Left cardiac atrium (tissue), 4 donors: ENCODE measurements at regions of chr20 and their contacts with region 1.

Region 1: DNA sequence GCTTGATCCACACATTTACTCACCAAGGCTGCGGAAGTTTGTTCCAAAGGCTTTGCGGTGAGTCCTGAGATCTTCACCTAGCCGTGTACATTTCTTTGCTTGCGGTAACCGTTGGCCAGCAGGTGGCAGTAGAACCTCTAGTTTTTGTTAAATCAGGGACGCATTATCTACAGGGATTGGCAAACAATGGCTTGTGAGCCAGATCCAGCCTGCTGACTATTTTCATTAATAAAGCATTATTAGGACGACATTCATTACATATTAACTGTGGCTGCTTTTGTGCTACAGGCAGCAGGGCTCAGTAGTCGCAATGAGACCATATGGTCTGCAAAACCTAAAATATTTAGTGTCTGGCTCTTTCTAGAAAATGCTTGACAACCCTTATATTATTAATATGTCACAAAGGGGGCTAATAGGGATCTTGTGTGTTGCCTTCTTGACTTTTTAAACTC is 174.1 kb downstream of the DOK5 start:
- DNase-seq: peak; percentile 85
- ATAC-seq: peak; percentile 78 to 89

Region 2: DNA sequence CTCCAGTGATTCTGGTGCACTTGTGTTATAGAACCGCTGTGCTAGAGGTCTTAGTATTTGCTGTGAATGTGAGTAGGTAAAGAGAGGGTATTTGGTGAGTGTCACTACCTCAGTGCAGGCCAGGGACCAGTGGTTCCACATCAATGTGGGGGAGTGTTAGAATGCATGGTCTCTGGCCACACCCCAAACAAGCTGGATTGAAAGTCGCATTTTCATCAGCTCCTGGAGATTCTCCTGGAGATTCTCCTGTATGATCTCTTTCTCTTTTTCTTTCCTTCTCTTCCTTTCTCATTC is 552.4 kb before region 1 on chr20:
- intact Hi-C with region 1: loop called (anchors 2 to 10 kb)
- DNase-seq: no peak
- ATAC-seq: no peak

Region 3: DNA sequence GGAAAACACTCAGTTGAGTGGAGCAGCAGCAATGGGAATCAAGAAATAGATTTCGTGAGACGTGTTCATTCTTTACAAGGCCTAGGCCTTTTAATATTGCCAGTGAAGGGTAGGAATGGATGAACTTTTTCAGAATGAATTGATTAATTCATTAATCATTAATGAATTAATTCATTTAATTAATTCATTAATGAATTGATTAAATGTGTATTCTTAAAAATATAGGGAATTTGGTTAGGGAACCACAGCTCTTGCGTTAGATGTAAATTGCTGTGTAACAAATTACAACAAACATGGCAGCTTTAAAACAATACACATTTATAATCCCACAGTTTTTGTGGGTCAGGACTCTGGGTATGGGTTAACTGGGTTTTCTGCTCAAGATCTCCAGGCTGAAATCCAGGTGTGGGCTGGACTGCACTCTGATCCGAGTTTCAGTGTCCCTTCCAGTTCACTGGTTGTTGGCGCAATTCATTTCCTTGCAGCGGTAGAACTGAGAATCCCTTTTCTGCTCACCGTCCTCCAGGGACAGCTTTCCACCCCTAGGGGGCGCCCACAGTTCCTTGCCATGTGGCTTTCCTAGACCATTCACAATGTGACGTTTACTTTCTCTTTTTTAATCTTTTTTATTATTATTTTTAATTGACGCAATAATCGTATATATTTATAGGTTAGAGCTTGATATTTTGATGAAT is 546.3 kb before region 1 on chr20:
- intact Hi-C with region 1: loop called in 1 of 2 experiments (anchors 10 kb)
- DNase-seq: peak; percentile 72
- ATAC-seq: peak in 1 of 2 donors; percentile 52

Region 4: DNA sequence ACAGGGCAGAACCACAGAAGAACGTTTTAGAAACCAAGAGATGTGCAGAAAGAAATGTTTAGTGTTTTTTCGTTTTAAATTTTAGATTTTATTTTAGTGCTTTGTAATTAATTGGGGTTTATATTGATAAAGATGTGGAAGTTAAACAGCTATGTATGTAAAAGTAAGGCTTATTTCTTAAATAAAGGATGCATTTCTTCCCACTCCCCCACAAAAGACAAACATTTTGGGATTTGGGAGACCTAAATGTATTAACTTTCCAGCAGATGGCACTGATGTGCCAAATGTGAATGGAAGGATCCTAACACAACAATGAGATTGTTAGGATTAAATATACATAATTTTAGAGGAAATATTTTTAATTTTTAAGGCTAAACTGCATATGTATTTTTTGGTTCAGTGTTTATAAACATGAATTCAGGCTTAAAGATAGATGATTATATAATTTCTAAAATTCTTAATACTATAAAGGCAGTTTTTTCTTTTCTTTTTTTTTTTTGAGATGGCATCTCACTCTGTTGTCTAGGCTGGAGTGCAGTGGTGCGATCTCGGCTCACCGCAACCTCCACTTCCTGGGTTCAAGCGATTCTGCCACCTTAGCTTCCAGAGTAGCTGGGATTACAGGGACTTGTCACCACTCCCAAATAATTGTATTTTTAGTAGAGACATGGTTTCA is 429.6 kb before region 1 on chr20:
- intact Hi-C with region 1: loop called (anchors 2 to 5 kb)
- DNase-seq: no peak
- ATAC-seq: no peak

Region 5: DNA sequence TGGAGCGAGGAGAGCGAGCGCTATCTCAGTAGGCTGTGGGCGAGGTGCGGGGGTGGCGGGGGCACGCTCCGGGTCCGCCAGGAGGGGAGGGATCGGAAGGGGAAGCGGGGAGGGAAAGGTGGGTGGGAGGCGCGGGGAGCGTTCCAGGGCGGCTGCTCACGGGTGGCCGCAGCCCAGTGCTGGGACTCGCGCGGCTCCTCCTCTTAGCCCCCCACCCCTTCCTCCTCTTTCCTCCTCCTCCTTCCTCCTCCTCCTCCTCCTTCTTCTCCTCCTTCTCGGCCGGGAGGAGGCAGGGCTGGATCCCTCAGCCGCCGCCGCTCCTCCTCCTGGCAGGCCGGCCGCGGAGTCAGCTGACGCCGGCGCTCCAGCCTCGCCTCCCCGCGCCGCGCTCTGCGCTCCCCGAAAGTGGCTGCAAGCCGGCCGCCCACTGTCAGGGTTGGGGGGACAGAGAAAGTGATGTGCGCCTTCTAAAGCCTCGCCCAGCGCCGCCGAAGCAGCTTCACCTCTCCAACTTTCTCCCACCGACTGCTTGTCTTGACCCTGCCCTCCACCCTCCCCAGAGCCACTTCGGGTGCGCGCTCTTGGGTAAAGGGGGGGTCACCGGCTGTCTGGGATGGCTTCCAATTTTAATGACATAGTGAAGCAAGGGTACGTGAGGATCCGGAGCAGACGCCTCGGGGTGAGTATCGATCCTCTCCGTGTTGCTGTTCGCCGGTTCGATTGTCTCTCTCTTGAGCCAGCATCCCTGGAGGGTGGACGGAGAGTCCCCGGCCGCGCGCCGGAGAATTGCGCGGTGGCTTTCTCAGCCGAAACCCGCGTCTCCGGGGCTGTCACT is 174.0 kb before region 1 on chr20 and contains the start of gene DOK5:
- intact Hi-C with region 1: loop called in 1 of 2 experiments (anchors 5 kb)
- DNase-seq: peak; percentile 72
- ATAC-seq: peak; percentile 85 to 94
- total RNA-seq, gene DOK5: 10.9 to 14.3 TPM

Region 6: GRCh38 chr20:54740511-54741348 is 91.2 kb after region 1 on chr20:
- intact Hi-C with region 1: no loop called
- DNase-seq: no peak
- ATAC-seq: no peak